Uterus (tissue), 4 donors: ENCODE measurements at regions of chr13 and their contacts with region 1.

Region 1: GRCh38 chr13:110412132-110412914 is 105.2 kb downstream of the COL4A2 start:
- DNase-seq: peak; percentile 94 to 96
- H3K4me3 ChIP-seq: no peak overlapping the region
- H3K27ac ChIP-seq: peak overlapping the region; percentile 92 to 97
- H3K4me1 ChIP-seq: peaks cover 31 to 42% of the 10 kb centered on the region in 2 donors
- H3K27me3 ChIP-seq: no peaks in the 10 kb centered on the region
- CTCF ChIP-seq: peak; percentile 88 to 96 (median 90)
- POLR2A ChIP-seq: peak; percentile 29 to 56

Region 2: DNA sequence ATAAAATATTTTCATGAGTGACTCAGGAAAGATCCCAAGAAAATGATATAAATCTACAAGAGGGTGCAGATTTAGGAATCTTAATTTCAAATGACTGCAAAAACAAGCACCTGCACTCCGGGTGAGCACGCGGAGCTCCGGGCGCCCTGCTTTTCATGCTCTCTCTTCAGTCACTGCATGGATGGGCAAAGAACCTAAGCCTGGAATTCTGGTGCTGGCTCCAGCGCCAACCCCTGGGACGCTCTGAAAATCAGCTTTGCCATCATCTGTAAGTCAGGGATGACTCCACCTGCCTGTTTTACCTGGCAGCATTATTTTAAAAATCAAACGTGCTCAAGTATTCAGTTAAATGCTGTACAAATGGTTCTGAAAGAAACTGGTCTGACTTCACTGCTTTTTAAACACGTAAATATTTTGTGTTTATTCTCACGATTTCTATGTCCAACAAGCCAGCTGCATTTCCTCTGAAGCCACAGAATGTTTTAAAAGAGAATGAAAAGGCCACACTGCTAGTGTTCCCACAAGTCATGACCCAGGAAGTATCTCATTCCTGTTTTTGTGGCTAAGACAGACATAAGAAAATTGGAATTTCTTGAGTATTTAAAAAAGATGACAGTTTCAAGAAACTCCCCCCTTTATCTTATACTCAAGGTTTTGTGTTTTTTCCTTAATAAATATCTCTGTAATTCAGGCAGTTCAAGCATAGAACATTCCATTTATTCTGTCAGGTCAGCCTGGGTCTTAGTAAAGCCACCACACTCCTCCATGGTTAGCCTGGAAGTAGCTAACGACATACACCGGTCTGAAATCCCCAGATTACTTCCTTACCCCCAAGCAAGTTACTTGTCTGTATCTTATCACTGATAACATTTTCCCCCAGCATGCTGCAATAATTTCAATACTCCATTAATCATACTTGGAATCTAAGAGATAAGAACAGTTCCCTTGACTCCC is 186.4 kb before region 1 on chr13:
- intact Hi-C with region 1: loop called (anchors 10 kb)
- DNase-seq: no peak
- H3K4me3 ChIP-seq: no peak overlapping the region
- H3K27ac ChIP-seq: peak overlapping the region; percentile 35 to 57
- H3K4me1 ChIP-seq: peaks cover 0 to 7% of the 10 kb centered on the region in 2 donors
- H3K27me3 ChIP-seq: no peaks in the 10 kb centered on the region
- CTCF ChIP-seq: no peak
- POLR2A ChIP-seq: no peak

Region 3: DNA sequence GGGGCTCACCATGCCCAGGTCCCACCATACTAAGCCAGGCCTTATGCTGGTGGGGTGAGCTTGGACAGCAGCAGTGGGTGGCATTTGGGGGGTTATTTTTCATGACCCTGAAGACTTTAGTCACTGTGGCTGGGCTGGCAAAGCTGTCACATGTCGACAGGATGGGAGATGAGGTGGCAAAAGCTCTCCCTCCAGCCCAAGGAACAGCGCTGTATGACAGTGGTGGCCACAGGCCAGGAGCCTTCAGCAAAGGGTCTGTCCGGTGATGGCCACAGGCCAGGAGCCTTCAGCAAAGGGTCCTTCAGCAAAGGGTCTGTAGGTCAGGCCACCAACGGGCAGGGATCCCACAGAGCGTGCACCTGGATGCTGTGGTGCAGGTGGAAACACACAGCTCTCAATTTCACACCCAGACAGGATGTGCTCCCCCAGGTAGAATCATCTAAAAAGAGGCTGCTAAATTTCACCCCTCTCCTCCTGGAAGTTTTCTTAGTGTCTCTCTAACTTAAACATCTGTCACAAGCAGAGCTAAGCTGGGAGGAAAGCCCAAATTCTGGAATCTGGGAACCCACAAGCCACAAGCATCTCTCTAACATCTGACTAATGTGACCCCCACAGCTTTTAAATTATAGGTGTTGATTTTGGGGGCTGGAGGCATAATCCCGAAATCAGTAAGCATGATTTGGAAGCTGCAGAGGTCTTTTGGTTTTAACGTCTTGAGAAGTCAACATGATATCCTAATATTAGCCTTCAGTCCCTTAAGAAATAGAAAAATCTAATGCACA is 128.4 kb before region 1 on chr13:
- intact Hi-C with region 1: no loop called
- DNase-seq: no peak
- H3K4me3 ChIP-seq: no peak overlapping the region
- H3K27ac ChIP-seq: peak overlapping the region; percentile 29 to 42
- H3K4me1 ChIP-seq: peaks cover 5 to 11% of the 10 kb centered on the region in 2 donors
- H3K27me3 ChIP-seq: no peaks in the 10 kb centered on the region
- CTCF ChIP-seq: no peak
- POLR2A ChIP-seq: no peak

Region 4: GRCh38 chr13:110306960-110307746 is 105.2 kb before region 1 on chr13 and contains the starts of genes COL4A1 and COL4A2:
- intact Hi-C with region 1: loop called (anchors 5 kb)
- DNase-seq: peak; percentile 86 to 90
- H3K4me3 ChIP-seq: peak within 1 kb of the TSS; percentile 78 to 85
- H3K27ac ChIP-seq: peak within 1 kb of the TSS; percentile 99 to 100
- H3K4me1 ChIP-seq: peaks cover 0 to 15% of the 10 kb centered on the region in 2 donors
- H3K27me3 ChIP-seq: no peaks in the 10 kb centered on the region
- CTCF ChIP-seq: no peak
- POLR2A ChIP-seq: peak; percentile 99 to 100
- total RNA-seq, gene COL4A1: 164 to 737 (median 209) TPM
- total RNA-seq, gene COL4A2: 157 to 606 (median 284) TPM